Sigmoid colon (tissue), 7 donors: ENCODE measurements at regions of chr18 and their contacts with region 1.

Region 1: DNA sequence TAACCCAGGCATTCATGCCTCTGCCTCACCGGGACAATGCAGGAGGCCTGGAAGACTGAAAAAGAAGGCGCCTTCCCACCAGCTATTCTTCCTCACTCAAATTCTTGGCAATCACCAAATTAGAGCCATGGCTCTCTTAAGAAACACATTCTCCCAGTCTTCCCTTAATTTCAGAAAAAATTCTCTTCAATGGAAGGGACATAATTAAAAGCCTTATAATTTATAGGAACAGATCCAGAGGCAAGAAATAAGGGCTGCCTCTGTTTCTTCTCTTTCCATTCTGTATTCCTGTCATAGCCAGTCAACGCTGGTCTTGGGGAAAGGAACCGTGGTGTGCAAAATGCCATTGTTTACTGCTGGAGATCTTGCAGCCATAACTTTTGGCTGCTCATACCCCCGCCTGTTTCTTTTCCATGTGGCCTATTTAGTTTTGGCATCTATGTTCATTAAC is 32.8 kb downstream of the DTNA start:
- DNase-seq: peak; percentile 68
- H3K4me3 ChIP-seq: no peak overlapping the region
- H3K27ac ChIP-seq: peak overlapping the region in 3 of 4 donors; percentile 39 to 72 (median 64)
- H3K4me1 ChIP-seq: peaks cover 0 to 69% (median 47%) of the 10 kb centered on the region in 4 donors
- H3K27me3 ChIP-seq: no peaks in the 10 kb centered on the region
- CTCF ChIP-seq: no peak
- EP300 ChIP-seq: peak in 3 of 4 donors; percentile 61 to 88 (median 75)
- POLR2A ChIP-seq: no peak

Region 2: GRCh38 chr18:34707670-34708069 is 35.2 kb before region 1 on chr18:
- intact Hi-C with region 1: loop called (anchors 2 kb)
- DNase-seq: peak; percentile 81
- H3K4me3 ChIP-seq: no peak overlapping the region
- H3K27ac ChIP-seq: peak overlapping the region; percentile 74 to 88 (median 79)
- H3K4me1 ChIP-seq: peaks cover 0 to 58% (median 49%) of the 10 kb centered on the region in 4 donors
- H3K27me3 ChIP-seq: no peaks in the 10 kb centered on the region
- CTCF ChIP-seq: no peak
- EP300 ChIP-seq: no peak
- POLR2A ChIP-seq: no peak

Region 3: DNA sequence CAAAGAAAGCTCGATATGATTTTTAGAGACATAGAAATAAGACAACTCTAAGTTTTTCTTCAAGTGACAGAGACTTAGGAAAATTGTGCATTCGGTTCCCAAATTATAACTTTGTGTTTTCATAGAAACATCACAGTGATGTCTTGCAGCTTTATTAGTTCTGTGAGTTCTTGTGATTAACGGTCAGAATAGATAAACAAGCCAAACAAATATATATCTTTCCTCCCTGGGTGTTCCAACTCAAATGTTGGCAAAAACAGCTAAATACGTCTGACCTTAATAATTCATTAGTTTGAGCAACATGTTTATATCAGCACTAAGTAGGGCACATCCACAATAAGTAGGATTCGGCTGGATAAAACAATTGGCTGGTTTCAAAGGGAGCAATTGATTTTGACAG is 14.8 kb after region 1 on chr18:
- intact Hi-C with region 1: loop called (anchors 1 kb)
- DNase-seq: no peak
- H3K4me3 ChIP-seq: no peak overlapping the region
- H3K27ac ChIP-seq: no peak overlapping the region
- H3K4me1 ChIP-seq: peaks cover 0 to 14% (median 3%) of the 10 kb centered on the region in 4 donors
- H3K27me3 ChIP-seq: no peaks in the 10 kb centered on the region
- CTCF ChIP-seq: no peak
- EP300 ChIP-seq: no peak
- POLR2A ChIP-seq: no peak

Region 4: DNA sequence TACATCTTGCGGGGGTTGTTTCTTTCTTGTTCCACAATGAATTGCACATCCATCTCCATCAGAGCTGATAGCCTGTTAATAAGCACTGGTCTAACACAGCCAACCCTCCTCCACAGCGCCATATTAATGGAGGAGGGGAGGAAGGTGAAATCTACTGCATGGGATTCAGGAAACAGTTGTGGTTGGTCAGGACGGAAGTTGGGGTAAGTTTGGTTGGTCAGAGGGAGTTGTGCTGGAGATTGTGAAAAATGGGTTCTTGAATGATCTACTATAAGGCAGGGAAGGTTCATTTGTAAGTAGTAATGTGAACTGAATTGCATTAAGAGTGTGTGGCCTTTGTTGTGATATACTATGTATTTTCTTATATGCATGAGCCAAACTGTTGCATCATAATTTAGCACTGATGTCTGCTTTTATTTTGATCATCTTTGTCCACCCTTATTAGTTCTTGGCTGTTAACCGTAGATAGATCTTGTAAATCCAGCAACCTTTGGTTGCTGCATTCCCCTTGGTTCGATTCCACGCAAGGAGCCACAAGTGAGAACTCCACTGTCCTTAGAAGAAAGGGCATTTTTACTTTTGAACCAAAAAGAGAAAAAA is 147.7 kb after region 1 on chr18:
- intact Hi-C with region 1: no loop called
- DNase-seq: no peak
- H3K4me3 ChIP-seq: no peak overlapping the region
- H3K27ac ChIP-seq: no peak overlapping the region
- H3K4me1 ChIP-seq: no peaks in the 10 kb centered on the region
- H3K27me3 ChIP-seq: no peaks in the 10 kb centered on the region
- CTCF ChIP-seq: no peak
- EP300 ChIP-seq: no peak
- POLR2A ChIP-seq: no peak